ENCODE measurements at regions of chr11 and their contacts with region 1.

Region 1: DNA sequence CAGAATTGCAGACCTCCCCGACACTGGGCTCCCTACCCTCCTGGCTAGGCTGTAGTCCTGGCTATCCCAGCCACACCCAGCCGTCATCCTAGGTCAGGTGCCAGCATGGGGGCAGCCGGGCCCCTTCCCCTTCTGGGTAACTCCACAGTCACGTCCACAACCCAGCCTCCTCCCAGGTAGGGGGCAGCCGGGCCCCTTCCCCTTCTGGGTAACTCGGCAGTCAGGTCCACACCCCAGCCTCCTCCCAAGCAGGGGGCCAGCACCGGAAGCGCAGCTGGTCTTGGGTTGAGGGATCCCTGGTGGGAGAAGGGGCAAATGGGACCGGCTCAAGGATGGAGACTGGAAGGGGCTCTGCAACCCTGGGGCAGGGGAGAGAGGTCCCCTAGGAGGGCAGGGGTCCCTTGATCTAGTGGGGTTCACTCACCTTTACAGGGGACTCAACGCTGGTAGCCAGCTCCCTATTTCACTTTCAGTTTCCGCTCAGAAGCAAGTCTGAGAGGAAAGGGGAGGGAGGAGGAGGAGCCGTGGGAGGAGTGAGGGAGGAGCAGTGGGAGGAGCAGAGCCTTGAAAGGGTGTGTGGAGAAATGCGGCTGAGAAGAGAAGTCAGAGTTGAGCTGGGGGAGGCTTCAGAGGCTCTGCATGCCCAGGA is at the start of gene TRIM21:
- DNase-seq: peak; percentile 71 to 93 (median 88)
- ATAC-seq: peak; percentile 99
- H3K4me3 ChIP-seq: peak within 1 kb of the TSS; percentile 87
- H3K4me3 Mint-ChIP-seq: peak within 1 kb of the TSS; percentile 84
- H3K27ac ChIP-seq: peak within 1 kb of the TSS; percentile 54 to 68
- H3K27ac Mint-ChIP-seq: peak within 1 kb of the TSS; percentile 79
- H3K4me1 ChIP-seq: peaks cover 13% of the 10 kb centered on the region
- H3K4me1 Mint-ChIP-seq: peaks cover 54% of the 10 kb centered on the region
- H3K27me3 ChIP-seq: peaks cover 3 to 7% of the 10 kb centered on the region in 2 experiments
- H3K27me3 Mint-ChIP-seq: peaks cover 10% of the 10 kb centered on the region
- CTCF ChIP-seq: no peak
- total RNA-seq, gene TRIM21: 21.0 to 23.7 TPM

Region 2: DNA sequence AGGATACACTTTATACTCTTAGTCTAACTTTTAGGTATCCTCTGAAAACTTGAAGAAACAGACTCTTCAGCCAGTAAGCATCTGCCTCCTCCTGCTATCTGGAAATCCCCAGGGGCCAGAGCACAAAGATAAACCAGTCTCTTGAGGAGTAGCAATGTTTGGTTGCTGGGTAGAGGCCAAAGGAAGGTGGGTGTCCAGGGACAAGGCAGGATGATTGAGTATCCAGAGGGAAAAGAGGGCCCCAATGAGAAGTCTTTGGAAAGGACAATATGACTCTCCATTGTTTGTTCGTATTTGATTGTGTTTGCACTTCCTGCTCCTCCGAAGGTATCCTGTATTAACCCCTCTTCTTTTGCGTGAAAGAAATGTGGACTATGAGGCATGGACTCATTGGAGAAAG is 195.7 kb after region 1 on chr11:
- CTCF ChIA-PET with region 1: no interaction called
- POLR2A ChIA-PET with region 1: no interaction called
- intact Hi-C with region 1: no loop called
- DNase-seq: no peak
- ATAC-seq: no peak
- H3K4me3 ChIP-seq: no peak overlapping the region
- H3K4me3 Mint-ChIP-seq: no peak overlapping the region
- H3K27ac ChIP-seq: no peak overlapping the region
- H3K27ac Mint-ChIP-seq: no peak overlapping the region
- H3K4me1 ChIP-seq: no peaks in the 10 kb centered on the region
- H3K4me1 Mint-ChIP-seq: no peaks in the 10 kb centered on the region
- H3K27me3 ChIP-seq: peaks cover 0 to 20% of the 10 kb centered on the region in 2 experiments
- H3K27me3 Mint-ChIP-seq: peaks cover 36% of the 10 kb centered on the region
- CTCF ChIP-seq: no peak

Region 3: GRCh38 chr11:4607781-4608666 is 214.7 kb after region 1 on chr11 and contains the start of gene TRIM68:
- CTCF ChIA-PET with region 1: no interaction called
- POLR2A ChIA-PET with region 1: interaction called, 3 read pairs
- intact Hi-C with region 1: loop called in 1 of 2 experiments (anchors 5 kb)
- DNase-seq: peak; percentile 88 to 96 (median 92)
- ATAC-seq: peak; percentile 99
- H3K4me3 ChIP-seq: peak within 1 kb of the TSS; percentile 81
- H3K4me3 Mint-ChIP-seq: peak within 1 kb of the TSS; percentile 87
- H3K27ac ChIP-seq: peak within 1 kb of the TSS; percentile 74 to 79
- H3K27ac Mint-ChIP-seq: peak within 1 kb of the TSS; percentile 86
- H3K4me1 ChIP-seq: peaks cover 23% of the 10 kb centered on the region
- H3K4me1 Mint-ChIP-seq: peaks cover 53% of the 10 kb centered on the region
- H3K27me3 ChIP-seq: no peaks in the 10 kb centered on the region
- H3K27me3 Mint-ChIP-seq: no peaks in the 10 kb centered on the region
- CTCF ChIP-seq: no peak
- total RNA-seq, gene TRIM68: 4.1 to 5.4 TPM